ENCODE measurements at regions of chr1 and their contacts with region 1.

Region 1: DNA sequence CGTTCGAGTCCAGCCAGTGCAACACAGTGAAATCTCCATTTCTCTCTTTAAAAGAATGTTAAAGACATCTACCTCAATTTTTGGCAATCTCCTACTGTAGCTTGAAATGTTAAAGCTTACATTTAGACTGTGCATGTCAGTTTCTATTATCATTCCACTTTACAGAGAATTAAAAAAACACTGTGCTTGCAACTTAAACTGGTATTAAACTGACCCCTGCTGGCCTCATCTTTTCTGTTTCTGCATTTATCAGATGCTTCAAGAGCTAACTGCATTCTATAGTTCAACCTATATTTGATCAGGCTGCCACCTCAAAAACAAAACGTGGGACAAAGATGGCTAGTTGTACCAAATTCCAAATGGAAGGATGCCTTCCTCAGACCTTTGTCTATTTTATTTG is 226.5 kb downstream of the SMYD3 start:
- DNase-seq: peak; percentile 44
- ATAC-seq: peak; percentile 17; the same call in 1 of the 2 replicates
- H3K4me3 ChIP-seq: no peak overlapping the region
- H3K27ac ChIP-seq: peak overlapping the region; percentile 54
- H3K4me1 ChIP-seq: peaks cover 23% of the 10 kb centered on the region
- H3K27me3 ChIP-seq: no peaks in the 10 kb centered on the region
- CTCF ChIP-seq: peak; percentile 67

Region 2: DNA sequence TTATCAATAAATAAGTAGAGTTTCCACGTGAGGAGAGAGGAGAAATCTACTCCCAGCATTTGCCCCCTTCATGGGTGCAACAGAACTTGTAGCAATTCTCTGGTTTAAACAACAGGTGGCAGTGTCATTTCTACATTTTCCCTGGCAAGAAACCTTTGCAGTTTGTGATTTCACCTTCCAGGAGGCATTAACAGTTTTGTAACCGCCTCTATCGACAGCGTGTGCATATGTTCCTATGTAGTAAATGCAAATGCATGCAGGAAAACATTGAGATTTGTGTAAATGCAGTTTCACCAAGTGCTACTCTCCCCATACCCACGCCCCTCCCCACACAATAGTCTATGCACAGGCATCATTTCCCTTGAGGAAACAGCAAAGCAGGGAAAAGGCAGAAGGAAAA is 268.2 kb before region 1 on chr1:
- CTCF ChIA-PET with region 1: interaction called, 4 read pairs
- POLR2A ChIA-PET with region 1: no interaction called
- intact Hi-C with region 1: loop called (anchors 1 kb)
- DNase-seq: peak; percentile 66
- ATAC-seq: peak; percentile 49
- H3K4me3 ChIP-seq: no peak overlapping the region
- H3K27ac ChIP-seq: no peak overlapping the region
- H3K4me1 ChIP-seq: no peaks in the 10 kb centered on the region
- H3K27me3 ChIP-seq: no peaks in the 10 kb centered on the region
- CTCF ChIP-seq: peak; percentile 85

Region 3: DNA sequence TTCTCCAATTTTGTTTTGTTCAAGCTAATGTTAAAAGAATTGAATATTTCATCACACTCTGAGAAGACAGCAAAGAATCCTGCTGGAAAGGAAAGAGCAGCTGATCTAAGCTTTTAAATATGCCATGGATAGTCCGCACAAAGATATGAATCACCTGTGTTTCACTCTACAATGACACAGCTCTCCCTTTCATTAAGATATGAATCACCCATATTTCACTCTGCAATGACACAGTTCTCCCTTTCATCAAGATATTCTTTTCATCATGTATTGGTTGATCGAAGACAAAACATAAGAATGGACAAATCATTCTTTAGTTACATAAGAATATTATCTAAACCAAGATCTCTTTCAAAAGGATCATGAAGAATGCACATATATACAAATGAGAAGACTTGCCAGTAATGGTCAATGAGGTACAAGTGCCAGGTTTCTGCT is 140.8 kb before region 1 on chr1:
- CTCF ChIA-PET with region 1: no interaction called
- POLR2A ChIA-PET with region 1: no interaction called
- intact Hi-C with region 1: loop called (anchors 5 kb)
- DNase-seq: peak; percentile 97
- ATAC-seq: peak; percentile 78
- H3K4me3 ChIP-seq: peak overlapping the region; percentile 21; the same call in 1 of the 2 replicates
- H3K27ac ChIP-seq: peak overlapping the region; percentile 96
- H3K4me1 ChIP-seq: peaks cover 52% of the 10 kb centered on the region
- H3K27me3 ChIP-seq: no peaks in the 10 kb centered on the region
- CTCF ChIP-seq: no peak

Region 4: DNA sequence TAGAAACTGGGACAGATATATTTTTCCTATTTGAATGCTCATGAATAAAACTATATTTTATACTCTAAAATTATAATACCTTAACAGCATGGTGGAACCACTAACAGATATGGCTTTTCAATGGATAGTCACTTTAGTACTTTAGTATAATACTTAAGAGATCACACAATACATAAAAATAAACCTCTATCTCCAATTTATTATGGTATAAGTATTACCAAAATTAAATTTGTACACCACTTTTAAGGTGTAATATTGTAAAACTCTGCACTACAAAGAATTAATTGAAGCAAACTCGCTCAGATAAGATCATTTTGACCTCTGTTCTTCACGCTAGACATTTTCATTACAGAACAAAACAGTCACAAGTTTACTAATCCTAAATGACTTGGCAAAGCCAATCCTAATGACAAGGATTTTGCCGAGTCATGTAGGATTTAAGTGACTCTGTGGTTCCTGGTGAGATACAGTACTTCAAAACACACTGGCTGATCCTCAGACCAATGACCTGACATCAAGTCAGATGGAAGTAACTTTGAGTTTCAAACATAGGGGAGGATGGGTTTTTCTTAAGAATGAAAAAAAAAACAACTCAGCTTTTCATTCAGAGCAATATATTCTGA is 26.0 kb after region 1 on chr1:
- CTCF ChIA-PET with region 1: no interaction called
- POLR2A ChIA-PET with region 1: no interaction called
- intact Hi-C with region 1: no loop called
- DNase-seq: no peak
- ATAC-seq: no peak
- H3K4me3 ChIP-seq: no peak overlapping the region
- H3K27ac ChIP-seq: no peak overlapping the region
- H3K4me1 ChIP-seq: peaks cover 7% of the 10 kb centered on the region; the same call in 1 of the 2 replicates
- H3K27me3 ChIP-seq: no peaks in the 10 kb centered on the region
- CTCF ChIP-seq: no peak

Measured in PC-3 (cell line).